ENCODE measurements at regions of chr4 and their contacts with region 1.

Region 1: GRCh38 chr4:108160741-108161352 is 7.9 kb downstream of the LEF1 start:
- DNase-seq: peak in 4 of 10 donors; percentile 38 to 64 (median 56)
- ATAC-seq: peak; percentile 48 to 64
- H3K4me3 Mint-ChIP-seq: peak overlapping the region; percentile 84 to 100 (median 94)
- H3K27ac Mint-ChIP-seq: peak overlapping the region; percentile 73 to 96 (median 90)
- H3K4me1 Mint-ChIP-seq: peaks cover 20 to 58% (median 44%) of the 10 kb centered on the region in 4 donors
- H3K27me3 Mint-ChIP-seq: no peaks in the 10 kb centered on the region

Region 2: DNA sequence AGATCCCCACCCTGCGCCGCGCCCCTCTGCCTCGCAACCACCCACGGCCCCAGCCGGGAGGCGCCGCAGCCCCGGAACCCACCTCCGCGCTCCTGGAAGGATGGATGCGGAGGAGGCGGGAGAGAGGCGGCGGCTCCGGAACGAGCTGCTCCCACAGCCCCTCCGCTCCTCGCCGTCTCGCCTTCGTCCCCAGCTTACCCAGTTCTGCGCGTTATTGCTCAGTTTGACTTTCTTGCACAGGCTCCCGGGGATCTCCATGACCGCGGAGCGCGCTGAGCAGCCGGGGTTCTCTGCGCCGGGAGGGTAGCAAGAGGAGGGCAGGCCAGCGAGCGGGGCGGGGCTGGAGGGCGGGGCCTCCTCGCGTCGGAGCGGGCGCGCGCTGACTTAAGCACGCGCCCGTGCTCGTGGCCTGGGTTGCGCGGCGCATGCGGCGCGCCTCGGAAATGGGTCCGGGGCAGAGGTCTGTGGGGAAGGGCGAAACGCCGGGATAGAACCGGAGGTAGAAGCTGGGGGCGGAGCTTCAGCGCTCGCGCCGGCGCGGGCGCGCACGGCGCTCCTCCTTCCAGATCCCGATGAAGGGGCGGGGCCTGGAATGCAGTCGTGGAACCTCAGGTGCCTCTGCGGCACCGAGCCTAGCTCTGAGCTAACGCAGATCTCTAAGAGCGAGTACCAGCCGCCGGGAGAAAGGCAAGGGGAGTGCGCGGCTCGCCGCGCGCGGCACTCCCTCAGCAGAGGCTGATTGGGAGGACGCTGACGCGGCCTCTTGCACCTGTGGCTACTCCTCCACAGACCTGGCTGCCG is 440.7 kb before region 1 on chr4 and contains the start of gene PAPSS1:
- POLR2A ChIA-PET with region 1: no interaction called
- DNase-seq: peak; percentile 89 to 97 (median 95)
- ATAC-seq: peak; percentile 85
- H3K4me3 Mint-ChIP-seq: peak within 1 kb of the TSS; percentile 93 to 98 (median 95)
- H3K27ac Mint-ChIP-seq: peak within 1 kb of the TSS; percentile 87 to 98 (median 95)
- H3K4me1 Mint-ChIP-seq: peaks cover 22 to 32% (median 30%) of the 10 kb centered on the region in 4 donors
- H3K27me3 Mint-ChIP-seq: no peaks in the 10 kb centered on the region
- polyA plus RNA-seq, gene PAPSS1: 22.8 to 23.9 (median 23.2) TPM

Region 3: GRCh38 chr4:108080747-108081146 is 80.1 kb before region 1 on chr4:
- POLR2A ChIA-PET with region 1: interaction called, 10 read pairs
- DNase-seq: peak; percentile 48 to 87 (median 71)
- ATAC-seq: peak; percentile 79 to 91
- H3K4me3 Mint-ChIP-seq: peak overlapping the region; percentile 66 to 84 (median 81)
- H3K27ac Mint-ChIP-seq: peak overlapping the region; percentile 94 to 99 (median 98)
- H3K4me1 Mint-ChIP-seq: peaks cover 41 to 82% (median 72%) of the 10 kb centered on the region in 4 donors
- H3K27me3 Mint-ChIP-seq: no peaks in the 10 kb centered on the region

Region 4: GRCh38 chr4:108135549-108136209 is 25.2 kb before region 1 on chr4:
- POLR2A ChIA-PET with region 1: interaction called, 10 read pairs
- DNase-seq: no peak
- ATAC-seq: peak; percentile 14 to 15
- H3K4me3 Mint-ChIP-seq: peak overlapping the region; percentile 64 to 90 (median 82)
- H3K27ac Mint-ChIP-seq: peak overlapping the region; percentile 89 to 97 (median 93)
- H3K4me1 Mint-ChIP-seq: peaks cover 53 to 93% (median 90%) of the 10 kb centered on the region in 4 donors
- H3K27me3 Mint-ChIP-seq: no peaks in the 10 kb centered on the region

Region 5: GRCh38 chr4:108141213-108141950 is 19.5 kb before region 1 on chr4:
- POLR2A ChIA-PET with region 1: interaction called, 12 read pairs
- DNase-seq: peak in 1 of 10 donors; percentile 46
- ATAC-seq: peak in 1 of 2 donors; percentile 3
- H3K4me3 Mint-ChIP-seq: peak overlapping the region; percentile 68 to 90 (median 81)
- H3K27ac Mint-ChIP-seq: peak overlapping the region; percentile 90 to 97 (median 94)
- H3K4me1 Mint-ChIP-seq: peaks cover 50 to 94% (median 90%) of the 10 kb centered on the region in 4 donors
- H3K27me3 Mint-ChIP-seq: no peaks in the 10 kb centered on the region

Region 6: DNA sequence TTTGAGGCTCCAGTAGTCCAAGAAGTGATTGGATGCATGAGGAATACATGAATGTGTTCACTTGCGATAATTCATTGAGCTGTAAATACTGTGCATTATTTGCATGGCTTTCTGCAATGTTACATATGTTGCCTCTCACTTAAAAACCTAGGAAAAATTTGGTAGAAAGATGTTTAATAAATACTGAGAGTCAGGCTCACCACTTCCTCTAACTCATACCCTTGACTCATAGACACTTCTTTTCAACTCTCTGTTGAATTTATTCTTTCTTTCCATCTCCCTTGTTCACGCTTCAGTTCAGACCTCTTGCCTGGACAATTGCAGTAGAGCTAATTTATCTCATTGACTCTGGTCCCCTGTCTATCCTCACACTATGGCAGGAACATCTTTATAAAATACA is 43.7 kb after region 1 on chr4:
- POLR2A ChIA-PET with region 1: no interaction called
- DNase-seq: no peak
- ATAC-seq: no peak
- H3K4me3 Mint-ChIP-seq: no peak overlapping the region
- H3K27ac Mint-ChIP-seq: peak overlapping the region in 2 of 10 donors; percentile 35 to 38
- H3K4me1 Mint-ChIP-seq: peaks cover 12 to 28% (median 23%) of the 10 kb centered on the region in 4 donors
- H3K27me3 Mint-ChIP-seq: no peaks in the 10 kb centered on the region

Measured in naive thymus-derived CD8-positive, alpha-beta T cell (primary cell).